CD8-positive, alpha-beta T cell (primary cell): ENCODE measurements at regions of chr6 and their contacts with region 1.

Region 1: GRCh38 chr6:75893058-75893775 is 144.2 kb downstream of the MYO6 start:
- DNase-seq: peak in 2 of 9 experiments; percentile 46 to 55
- ATAC-seq: no peak
- H3K4me3 ChIP-seq: no peak overlapping the region
- H3K4me3 Mint-ChIP-seq: no peak overlapping the region
- H3K27ac ChIP-seq: no peak overlapping the region
- H3K27ac Mint-ChIP-seq: no peak overlapping the region
- H3K4me1 ChIP-seq: no peaks in the 10 kb centered on the region
- H3K4me1 Mint-ChIP-seq: peaks cover 3% of the 10 kb centered on the region
- H3K27me3 ChIP-seq: peaks cover 0 to 3% of the 10 kb centered on the region in 2 experiments
- H3K27me3 Mint-ChIP-seq: no peaks in the 10 kb centered on the region
- CTCF ChIP-seq: peak; percentile 84

Region 2: GRCh38 chr6:75876152-75876551 is 17.1 kb before region 1 on chr6:
- CTCF ChIA-PET with region 1: interaction called, 21 read pairs
- POLR2A ChIA-PET with region 1: no interaction called
- intact Hi-C with region 1: no loop called
- DNase-seq: no peak
- ATAC-seq: no peak
- H3K4me3 ChIP-seq: no peak overlapping the region
- H3K4me3 Mint-ChIP-seq: no peak overlapping the region
- H3K27ac ChIP-seq: no peak overlapping the region
- H3K27ac Mint-ChIP-seq: no peak overlapping the region
- H3K4me1 ChIP-seq: no peaks in the 10 kb centered on the region
- H3K4me1 Mint-ChIP-seq: no peaks in the 10 kb centered on the region
- H3K27me3 ChIP-seq: no peaks in the 10 kb centered on the region
- H3K27me3 Mint-ChIP-seq: no peaks in the 10 kb centered on the region
- CTCF ChIP-seq: no peak

Region 3: GRCh38 chr6:75882734-75883133 is 10.5 kb before region 1 on chr6:
- CTCF ChIA-PET with region 1: interaction called, 21 read pairs
- POLR2A ChIA-PET with region 1: no interaction called
- intact Hi-C with region 1: no loop called
- DNase-seq: no peak
- ATAC-seq: no peak
- H3K4me3 ChIP-seq: no peak overlapping the region
- H3K4me3 Mint-ChIP-seq: no peak overlapping the region
- H3K27ac ChIP-seq: no peak overlapping the region
- H3K27ac Mint-ChIP-seq: no peak overlapping the region
- H3K4me1 ChIP-seq: no peaks in the 10 kb centered on the region
- H3K4me1 Mint-ChIP-seq: no peaks in the 10 kb centered on the region
- H3K27me3 ChIP-seq: no peaks in the 10 kb centered on the region
- H3K27me3 Mint-ChIP-seq: no peaks in the 10 kb centered on the region
- CTCF ChIP-seq: no peak